Right ventricle myocardium superior (tissue), 1 donor: ENCODE measurements at regions of chr22 and their contacts with region 1.

Region 1: DNA sequence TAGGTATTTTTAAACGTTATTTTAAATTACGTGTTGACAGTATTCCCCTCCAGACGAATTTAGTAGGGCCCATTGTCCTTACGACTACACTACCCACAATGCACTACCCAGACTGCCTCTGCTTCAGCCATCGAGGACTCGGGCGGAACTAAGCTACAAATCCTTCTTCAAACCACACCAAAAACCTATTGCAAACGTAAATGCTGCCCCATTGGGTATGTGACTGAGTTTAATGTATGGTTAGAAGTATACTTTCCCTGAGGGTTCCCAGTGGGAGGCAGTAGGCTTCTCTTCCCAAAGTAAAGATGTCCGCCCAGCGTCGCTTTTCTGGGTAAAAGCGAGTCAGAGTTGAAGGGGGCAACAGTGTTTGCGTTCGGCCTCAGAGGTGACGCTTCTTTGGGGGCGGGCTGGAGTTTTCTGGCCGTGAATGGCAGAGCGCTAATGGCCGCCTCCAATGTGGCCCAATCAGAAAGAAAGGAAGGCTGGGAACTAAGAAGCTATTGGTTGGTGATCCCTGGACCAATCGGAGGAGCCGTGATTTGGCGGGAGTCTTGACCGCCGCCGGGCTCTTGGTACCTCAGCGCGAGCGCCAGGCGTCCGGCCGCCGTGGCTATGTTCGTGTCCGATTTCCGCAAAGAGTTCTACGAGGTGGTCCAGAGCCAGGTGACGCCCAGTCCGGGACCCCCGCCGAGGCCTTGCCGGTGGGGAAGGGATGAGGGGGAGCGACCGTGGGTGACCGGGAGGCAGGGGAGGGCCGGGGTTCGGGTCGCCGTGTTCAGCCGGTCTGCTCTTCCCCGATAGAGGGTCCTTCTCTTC is at the start of gene CDC45:
- DNase-seq: peak; percentile 97
- ATAC-seq: peak; percentile 97
- total RNA-seq, gene CDC45: 0.62 TPM

Region 2: DNA sequence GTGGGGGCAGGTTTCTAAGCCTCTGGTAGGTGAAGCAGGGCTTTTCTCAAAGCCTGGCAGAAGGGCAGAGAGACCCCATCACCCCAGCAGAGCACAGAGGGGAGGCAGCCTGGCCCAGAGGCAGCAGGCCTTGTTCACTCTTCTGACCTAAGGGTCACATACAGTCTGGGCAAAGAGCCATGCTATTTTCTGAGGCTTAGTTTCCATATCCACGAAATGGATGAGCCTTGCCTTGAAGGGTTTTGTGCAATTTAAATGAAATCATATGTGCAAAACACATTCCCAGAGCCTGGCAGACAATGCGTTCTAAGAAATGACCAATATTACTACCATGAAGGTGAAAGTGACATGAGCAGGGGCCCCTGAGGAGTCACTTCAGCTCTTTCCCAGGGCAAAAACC is 92.5 kb before region 1 on chr22:
- intact Hi-C with region 1: loop called (anchors 10 kb)
- DNase-seq: no peak
- ATAC-seq: no peak

Region 3: DNA sequence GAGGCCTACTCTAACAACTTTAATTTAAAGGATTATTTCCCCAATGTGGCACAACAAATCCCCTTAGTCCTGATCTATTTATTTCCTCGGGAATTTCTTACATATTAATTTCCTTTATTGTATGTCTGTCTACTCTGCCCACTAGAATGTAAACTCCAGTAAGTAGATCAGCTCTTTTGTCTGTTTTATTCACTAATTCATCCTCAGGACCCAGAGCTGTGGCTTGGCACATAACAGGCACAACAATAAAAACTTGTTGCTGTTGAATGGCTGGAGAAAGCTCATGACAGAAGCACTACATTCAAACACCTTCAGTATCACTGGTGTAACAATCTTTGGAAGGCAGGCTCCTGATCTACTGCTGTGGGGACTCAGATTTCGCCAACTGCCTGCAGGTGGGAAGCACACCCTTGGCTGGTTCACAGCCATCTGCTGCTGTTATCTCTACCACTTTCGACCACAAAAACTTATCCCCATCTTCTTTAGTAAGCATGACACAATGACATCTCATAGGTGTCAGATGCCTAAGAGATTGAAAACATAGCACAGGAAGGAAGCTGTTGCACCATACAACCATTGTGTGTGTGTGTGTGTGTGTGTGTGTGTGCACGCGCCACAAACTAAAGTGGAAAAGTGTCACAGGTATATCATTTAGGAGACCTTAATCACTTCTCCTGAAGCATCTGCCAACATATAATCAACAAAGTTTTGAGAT is 59.9 kb before region 1 on chr22:
- intact Hi-C with region 1: no loop called
- DNase-seq: no peak
- ATAC-seq: peak; percentile 43

Region 4: DNA sequence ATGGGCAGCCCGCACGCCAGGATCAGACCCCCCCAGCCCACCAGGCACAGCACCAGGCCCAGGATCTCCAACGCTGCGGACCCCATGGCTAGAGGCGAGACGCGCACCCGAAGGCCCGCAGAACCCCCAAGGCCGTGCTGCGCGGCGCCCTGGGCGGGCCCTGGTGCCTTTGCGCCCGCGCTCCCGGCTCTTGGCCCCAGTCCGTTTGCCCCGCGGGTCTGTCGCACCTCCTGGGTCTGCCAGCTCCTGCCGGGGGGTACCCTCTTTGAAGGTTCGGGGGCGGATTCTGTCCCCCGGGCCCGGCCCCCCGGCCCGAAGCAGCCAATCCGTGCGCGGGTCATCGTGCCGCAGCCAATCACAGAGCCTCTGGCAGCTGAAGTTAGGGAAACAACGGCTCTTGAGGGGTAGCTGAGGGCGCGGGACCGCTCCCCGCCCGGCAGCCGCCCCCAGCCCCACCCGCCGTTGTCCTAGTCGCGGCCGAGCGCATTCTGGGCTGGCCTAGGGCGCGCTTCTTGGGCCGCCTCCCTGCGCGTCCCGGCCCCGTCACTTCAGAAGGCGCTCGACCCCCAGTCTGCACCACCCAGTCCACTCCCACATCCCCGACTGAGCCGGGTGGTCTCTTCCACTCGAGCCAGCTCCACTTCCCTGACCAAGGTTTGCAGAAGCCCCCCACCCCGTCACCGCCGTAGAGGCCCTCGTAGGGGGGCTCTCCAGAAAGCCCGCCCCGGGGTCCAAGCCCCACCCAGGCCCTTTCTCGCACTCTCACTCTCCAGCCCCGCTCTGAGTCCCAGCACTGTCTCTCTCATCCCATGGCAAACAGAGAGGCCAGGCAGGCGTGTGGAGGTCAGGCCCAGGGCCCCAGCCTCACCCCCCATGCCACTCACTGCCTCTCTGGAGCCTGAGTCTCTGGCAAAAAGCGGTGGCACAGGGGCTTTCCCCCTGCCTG is 44.9 kb after region 1 on chr22 and contains the start of gene CLDN5:
- intact Hi-C with region 1: no loop called
- DNase-seq: peak; percentile 69
- ATAC-seq: peak; percentile 63
- total RNA-seq, gene CLDN5: 23.9 TPM

Region 5: DNA sequence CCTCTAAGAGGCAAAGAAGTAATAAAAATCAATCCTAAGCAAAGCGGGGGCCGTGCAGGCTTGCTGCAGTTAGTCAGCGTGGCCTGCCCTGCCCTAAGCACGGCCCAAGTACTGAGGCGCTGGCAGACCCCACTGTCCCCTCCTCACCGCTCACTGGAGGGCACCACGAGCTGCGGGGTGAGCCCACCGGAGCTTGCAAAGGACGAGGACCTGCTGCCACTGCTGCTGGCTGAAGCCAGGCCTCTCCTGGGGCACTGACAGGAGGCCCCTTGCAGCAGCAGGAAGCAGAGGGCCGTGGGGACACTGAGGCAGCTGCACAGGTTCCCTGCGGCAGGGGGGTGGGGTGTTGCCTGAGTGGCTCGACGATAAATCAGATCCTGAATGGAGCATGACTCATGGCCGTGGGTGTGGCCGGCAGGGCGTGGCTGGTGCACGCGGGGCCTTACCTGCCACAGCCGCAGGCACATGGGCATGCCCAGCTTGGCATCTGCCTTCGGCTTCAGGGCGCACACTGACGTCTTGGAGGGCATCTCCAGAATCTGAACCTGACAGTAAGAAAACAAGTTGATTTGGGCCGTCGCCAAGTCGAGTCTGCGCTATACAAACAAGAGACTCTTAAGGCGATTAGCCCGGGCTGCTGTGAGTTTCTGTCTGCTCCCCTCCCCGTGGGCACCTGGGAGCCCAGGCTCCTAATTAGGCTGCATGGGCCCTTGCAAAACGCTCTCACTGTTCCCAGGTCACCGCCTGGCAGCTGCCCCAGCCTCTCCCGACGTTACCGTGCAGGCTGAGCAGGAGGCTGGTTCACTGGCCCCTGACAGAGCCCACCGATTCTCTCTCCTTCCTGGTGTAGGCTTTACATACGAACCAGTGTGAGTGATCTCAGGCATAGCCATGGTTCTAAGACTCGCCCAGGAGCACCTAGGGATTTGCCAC is 326.9 kb after region 1 on chr22:
- intact Hi-C with region 1: no loop called
- DNase-seq: no peak
- ATAC-seq: no peak